ENCODE measurements at regions of chr15 and their contacts with region 1.

Region 1: DNA sequence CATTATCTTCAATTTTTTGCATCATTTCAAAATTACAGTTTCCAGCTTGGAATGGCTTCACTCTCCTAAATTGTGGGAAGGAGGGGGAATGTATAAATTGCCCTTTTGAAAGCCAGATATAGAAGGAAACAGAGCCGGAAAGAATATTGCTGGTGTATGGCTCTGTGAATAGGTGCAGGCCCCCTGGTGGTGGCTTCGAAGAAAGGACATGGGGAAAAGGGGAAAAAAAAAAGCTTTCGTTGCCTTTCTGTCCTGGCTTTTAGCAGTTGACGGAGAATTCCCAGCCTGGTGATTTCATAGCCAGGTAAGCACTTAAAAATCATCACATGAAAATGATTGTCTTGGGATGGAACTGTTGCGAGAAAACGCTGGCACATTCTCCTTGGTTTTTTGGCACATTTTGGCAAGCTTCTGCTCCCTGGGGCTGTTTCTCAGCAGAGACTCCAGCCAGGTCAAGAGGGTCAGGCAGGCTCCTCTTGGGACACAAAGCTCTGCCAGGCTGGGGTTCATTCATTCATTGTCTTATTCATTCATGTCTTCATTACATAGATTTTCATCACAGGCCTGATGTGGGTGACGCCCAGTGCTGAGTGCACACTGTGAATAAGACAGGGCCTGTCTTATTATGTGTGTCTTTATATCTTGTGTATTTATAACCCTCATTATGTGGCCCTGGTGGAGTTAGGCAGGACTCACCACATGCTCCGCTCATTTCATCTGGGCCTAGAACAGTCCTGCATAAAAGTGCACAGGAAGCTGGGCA is 300.0 kb upstream of the TPM1 start:
- DNase-seq: peak; percentile 55
- ATAC-seq: no peak
- H3K4me3 Mint-ChIP-seq: no peak overlapping the region
- H3K27ac Mint-ChIP-seq: no peak overlapping the region
- H3K4me1 Mint-ChIP-seq: peaks cover 8% of the 10 kb centered on the region
- H3K27me3 Mint-ChIP-seq: no peaks in the 10 kb centered on the region
- CTCF ChIP-seq: peak; percentile 91

Region 2: GRCh38 chr15:62400778-62401177 is 341.8 kb before region 1 on chr15:
- CTCF ChIA-PET with region 1: no interaction called
- POLR2A ChIA-PET with region 1: no interaction called
- intact Hi-C with region 1: no loop called
- DNase-seq: no peak
- ATAC-seq: no peak
- H3K4me3 Mint-ChIP-seq: no peak overlapping the region
- H3K27ac Mint-ChIP-seq: no peak overlapping the region
- H3K4me1 Mint-ChIP-seq: no peaks in the 10 kb centered on the region
- H3K27me3 Mint-ChIP-seq: peaks cover 25% of the 10 kb centered on the region
- CTCF ChIP-seq: no peak

Region 3: DNA sequence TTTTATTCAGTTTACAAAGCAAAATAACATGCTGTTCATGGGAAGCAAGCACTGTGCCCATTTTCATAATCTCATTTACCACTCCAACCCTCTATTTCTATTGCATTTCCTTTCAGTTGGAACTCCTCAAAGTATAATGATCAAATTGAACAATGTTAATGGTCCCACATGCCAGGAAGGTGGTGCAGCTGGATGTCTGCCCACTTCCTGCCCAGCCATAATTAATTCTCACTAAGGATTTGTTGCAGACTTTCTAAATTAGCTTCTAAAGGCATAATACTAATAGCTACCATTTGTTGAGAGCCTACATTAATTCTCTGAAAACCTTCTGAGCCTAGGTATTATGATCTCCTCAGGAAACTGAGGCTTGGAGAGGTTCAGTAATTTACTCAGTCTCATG is 16.1 kb before region 1 on chr15:
- CTCF ChIA-PET with region 1: interaction called, 14 read pairs
- POLR2A ChIA-PET with region 1: interaction called, 3 read pairs
- intact Hi-C with region 1: no loop called
- DNase-seq: no peak
- ATAC-seq: no peak
- H3K4me3 Mint-ChIP-seq: no peak overlapping the region
- H3K27ac Mint-ChIP-seq: no peak overlapping the region
- H3K4me1 Mint-ChIP-seq: no peaks in the 10 kb centered on the region
- H3K27me3 Mint-ChIP-seq: peaks cover 7% of the 10 kb centered on the region
- CTCF ChIP-seq: no peak

Region 4: DNA sequence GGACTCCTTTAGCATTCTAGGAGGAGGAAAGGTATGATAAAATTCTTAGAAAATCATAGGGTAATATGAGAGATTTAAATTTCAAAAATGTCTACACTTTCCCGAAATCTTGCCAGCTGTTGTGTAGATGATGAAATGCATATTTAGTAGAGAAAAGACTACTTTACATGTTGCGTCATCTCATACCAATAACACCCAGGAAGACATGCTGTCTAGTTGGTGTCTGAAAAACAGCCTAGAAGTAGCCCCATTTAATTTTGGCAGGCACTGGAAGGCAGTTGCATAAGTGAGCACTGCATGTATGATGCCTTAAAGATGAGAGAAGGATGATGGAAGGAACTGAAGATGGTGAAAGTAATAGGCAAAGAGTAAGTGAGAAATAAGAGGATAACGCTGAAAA is 10.5 kb before region 1 on chr15:
- CTCF ChIA-PET with region 1: interaction called, 19 read pairs
- POLR2A ChIA-PET with region 1: no interaction called
- intact Hi-C with region 1: no loop called
- DNase-seq: no peak
- ATAC-seq: no peak
- H3K4me3 Mint-ChIP-seq: no peak overlapping the region
- H3K27ac Mint-ChIP-seq: no peak overlapping the region
- H3K4me1 Mint-ChIP-seq: no peaks in the 10 kb centered on the region
- H3K27me3 Mint-ChIP-seq: peaks cover 11% of the 10 kb centered on the region
- CTCF ChIP-seq: no peak

Region 5: DNA sequence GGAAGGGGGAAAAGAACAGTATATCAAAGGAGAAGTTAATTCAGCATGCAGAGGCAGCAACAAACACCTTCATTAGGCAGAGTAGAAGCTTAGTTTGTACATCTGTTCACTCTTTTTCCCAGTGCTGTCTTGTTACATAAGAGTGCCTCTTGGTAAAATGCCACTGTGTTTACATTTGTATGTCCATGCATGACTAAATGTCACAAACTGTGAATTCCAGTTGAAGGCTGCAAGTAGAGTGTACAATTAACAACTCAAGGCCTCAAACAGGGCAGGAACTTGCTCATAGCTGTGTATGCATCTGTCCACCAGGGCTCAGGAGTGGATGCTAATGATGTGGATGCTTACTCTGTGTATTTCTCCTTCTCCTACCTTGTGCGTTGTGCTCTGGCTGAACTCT is 85.8 kb after region 1 on chr15:
- CTCF ChIA-PET with region 1: no interaction called
- POLR2A ChIA-PET with region 1: no interaction called
- intact Hi-C with region 1: no loop called
- DNase-seq: no peak
- ATAC-seq: no peak
- H3K4me3 Mint-ChIP-seq: no peak overlapping the region
- H3K27ac Mint-ChIP-seq: no peak overlapping the region
- H3K4me1 Mint-ChIP-seq: no peaks in the 10 kb centered on the region
- H3K27me3 Mint-ChIP-seq: no peaks in the 10 kb centered on the region
- CTCF ChIP-seq: no peak

Region 6: GRCh38 chr15:62886431-62887071 is 144.0 kb after region 1 on chr15:
- CTCF ChIA-PET with region 1: no interaction called
- POLR2A ChIA-PET with region 1: no interaction called
- intact Hi-C with region 1: no loop called
- DNase-seq: no peak
- ATAC-seq: no peak
- H3K4me3 Mint-ChIP-seq: no peak overlapping the region
- H3K27ac Mint-ChIP-seq: no peak overlapping the region
- H3K4me1 Mint-ChIP-seq: no peaks in the 10 kb centered on the region
- H3K27me3 Mint-ChIP-seq: peaks cover 21% of the 10 kb centered on the region
- CTCF ChIP-seq: no peak

Measured in activated CD8-positive, alpha-beta T cell treated with anti-CD3 and anti-CD28 coated beads for 36 hours (primary cell).